ENCODE measurements at regions of chr9 and their contacts with region 1.

Region 1: DNA sequence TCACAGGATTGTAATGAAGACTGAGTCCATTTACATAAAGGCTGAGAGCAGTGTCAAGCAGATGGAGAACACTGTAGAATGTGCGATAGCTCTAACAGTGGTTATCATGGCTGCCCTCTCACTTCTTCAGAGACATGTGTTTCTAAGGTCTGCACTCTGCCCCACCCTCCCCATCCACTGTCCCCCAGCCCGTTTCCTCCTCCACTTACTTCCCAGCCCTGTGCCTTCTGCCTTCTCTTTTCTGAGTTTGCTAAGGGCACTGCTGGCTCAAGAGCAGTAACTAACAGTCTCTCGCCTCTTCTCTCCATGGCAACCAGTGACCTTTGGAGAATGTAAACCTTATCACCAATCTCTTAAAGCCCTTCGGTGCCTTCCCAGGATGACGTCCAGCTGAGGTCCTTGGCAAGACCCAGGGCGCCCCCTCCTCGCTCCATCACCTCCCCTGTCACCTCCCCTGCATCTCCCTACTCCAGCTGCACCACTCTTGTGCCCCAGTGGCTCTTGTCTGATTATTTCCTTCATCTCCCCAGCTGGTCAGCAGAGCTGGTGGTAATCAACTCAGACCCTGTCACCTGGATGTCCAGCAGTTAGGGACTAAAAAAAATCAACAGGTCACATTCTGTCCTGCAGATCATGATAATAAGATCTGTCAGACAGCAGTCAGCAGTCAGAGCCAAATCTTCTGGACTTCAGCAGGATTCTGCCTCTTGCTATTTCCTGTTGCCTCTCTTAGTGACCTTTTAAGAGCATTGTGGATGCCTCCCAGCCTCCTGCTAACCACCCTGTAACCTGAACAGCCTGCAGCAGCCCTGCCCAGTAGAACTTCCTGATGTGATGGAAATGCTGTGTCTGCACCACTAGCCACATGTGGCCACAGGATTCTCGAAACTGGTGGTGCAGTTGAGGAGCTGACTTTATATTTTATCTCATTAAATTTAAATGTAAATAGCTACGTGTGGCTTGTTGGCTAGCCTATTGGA is 9.0 kb downstream of the FXN start:
- DNase-seq: peak in 2 of 3 donors; percentile 40 to 50
- ATAC-seq: peak; percentile 48 to 83
- H3K4me3 ChIP-seq: no peak overlapping the region
- H3K27ac ChIP-seq: peak overlapping the region; percentile 11
- H3K4me1 ChIP-seq: peaks cover 8% of the 10 kb centered on the region
- H3K27me3 ChIP-seq: no peaks in the 10 kb centered on the region

Region 2: DNA sequence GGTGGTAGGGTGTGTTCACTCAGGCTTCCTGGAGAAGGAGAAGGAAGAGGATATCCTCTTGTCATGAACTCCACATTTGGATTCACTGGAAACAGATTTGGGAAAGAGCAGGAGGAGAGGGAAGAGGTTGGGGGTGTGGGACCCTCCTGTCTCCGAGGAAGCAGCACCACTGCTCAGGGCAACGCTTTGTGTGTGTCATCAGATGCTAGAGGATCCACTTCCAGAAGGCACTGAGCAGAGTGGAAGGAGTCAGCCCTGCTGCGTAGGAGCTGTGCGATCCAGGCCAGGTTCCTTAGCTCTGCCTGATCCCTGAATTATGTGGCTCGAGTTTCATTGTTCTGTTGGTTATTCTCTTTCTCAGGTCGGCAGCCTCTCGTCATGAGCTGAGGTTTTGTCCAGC is 92.2 kb after region 1 on chr9:
- intact Hi-C with region 1: no loop called
- DNase-seq: no peak
- ATAC-seq: peak in 1 of 2 donors; percentile 63
- H3K4me3 ChIP-seq: no peak overlapping the region
- H3K27ac ChIP-seq: peak overlapping the region; percentile 70
- H3K4me1 ChIP-seq: peaks cover 7% of the 10 kb centered on the region
- H3K27me3 ChIP-seq: no peaks in the 10 kb centered on the region

Region 3: DNA sequence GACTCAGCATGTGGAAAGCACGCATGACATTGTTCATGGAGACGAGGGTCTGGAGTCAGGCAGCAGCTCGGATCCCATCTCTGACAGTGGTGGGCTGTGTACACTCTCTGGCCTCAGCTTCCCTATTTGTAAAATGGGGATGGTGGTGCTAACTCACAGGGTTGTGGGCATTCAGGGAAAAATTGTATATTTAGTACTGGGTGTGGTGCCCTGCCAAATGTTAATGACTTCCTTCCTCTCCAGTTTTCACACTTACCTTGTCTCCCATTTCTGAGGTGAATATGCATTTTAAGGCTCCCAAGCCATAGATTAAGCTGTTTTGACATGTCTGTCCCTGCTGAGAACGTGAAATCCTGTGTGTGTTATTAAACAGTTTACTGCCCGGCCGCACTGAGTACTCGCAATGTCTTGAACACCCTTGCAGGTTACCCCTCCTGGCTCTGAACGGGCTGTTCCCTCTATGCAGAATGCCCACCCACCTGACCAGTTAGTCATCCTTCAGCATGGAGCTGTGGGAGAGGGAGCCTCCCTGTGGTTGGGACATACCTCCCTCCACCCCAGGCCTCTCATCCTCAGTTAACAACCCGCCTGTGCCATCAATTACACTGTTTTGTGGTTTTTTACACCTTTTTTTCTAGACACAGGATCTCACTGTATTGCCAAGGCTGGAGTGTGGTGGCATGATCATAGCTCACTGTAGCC is 155.4 kb after region 1 on chr9:
- intact Hi-C with region 1: loop called in 1 of 4 experiments (anchors 5 kb)
- DNase-seq: no peak
- ATAC-seq: peak; percentile 27 to 47
- H3K4me3 ChIP-seq: no peak overlapping the region
- H3K27ac ChIP-seq: no peak overlapping the region
- H3K4me1 ChIP-seq: peaks cover 13% of the 10 kb centered on the region
- H3K27me3 ChIP-seq: no peaks in the 10 kb centered on the region

Region 4: DNA sequence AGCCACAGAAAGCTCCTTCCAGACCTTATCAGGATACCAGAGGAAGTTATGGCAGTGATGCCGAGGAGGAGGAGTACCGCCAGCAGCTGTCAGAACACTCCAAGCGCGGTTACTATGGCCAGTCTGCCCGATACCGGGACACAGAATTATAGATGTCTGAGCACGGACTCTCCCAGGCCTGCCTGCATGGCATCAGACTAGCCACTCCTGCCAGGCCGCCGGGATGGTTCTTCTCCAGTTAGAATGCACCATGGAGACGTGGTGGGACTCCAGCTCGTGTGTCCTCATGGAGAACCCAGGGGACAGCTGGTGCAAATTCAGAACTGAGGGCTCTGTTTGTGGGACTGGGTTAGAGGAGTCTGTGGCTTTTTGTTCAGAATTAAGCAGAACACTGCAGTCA is 209.7 kb after region 1 on chr9:
- intact Hi-C with region 1: no loop called
- DNase-seq: peak in 1 of 3 donors; percentile 46
- ATAC-seq: no peak
- H3K4me3 ChIP-seq: no peak overlapping the region
- H3K27ac ChIP-seq: no peak overlapping the region
- H3K4me1 ChIP-seq: peaks cover 1% of the 10 kb centered on the region
- H3K27me3 ChIP-seq: no peaks in the 10 kb centered on the region

Region 5: GRCh38 chr9:69376651-69377050 is 332.1 kb after region 1 on chr9:
- intact Hi-C with region 1: no loop called
- DNase-seq: peak; percentile 48 to 66 (median 63)
- ATAC-seq: peak; percentile 75 to 93
- H3K4me3 ChIP-seq: no peak overlapping the region
- H3K27ac ChIP-seq: peak overlapping the region; percentile 63
- H3K4me1 ChIP-seq: peaks cover 7% of the 10 kb centered on the region
- H3K27me3 ChIP-seq: no peaks in the 10 kb centered on the region

Measured in right cardiac atrium (tissue), 5 donors.